ENCODE measurements at regions of chr2 and their contacts with region 1.

Region 1: GRCh38 chr2:222057347-222058073 is 241.3 kb downstream of the PAX3 start:
- DNase-seq: no peak
- H3K4me3 Mint-ChIP-seq: no peak overlapping the region
- H3K27ac Mint-ChIP-seq: no peak overlapping the region
- H3K4me1 Mint-ChIP-seq: peaks cover 7% of the 10 kb centered on the region
- H3K27me3 Mint-ChIP-seq: peaks cover 82% of the 10 kb centered on the region
- CTCF ChIP-seq: peak; percentile 65

Region 2: DNA sequence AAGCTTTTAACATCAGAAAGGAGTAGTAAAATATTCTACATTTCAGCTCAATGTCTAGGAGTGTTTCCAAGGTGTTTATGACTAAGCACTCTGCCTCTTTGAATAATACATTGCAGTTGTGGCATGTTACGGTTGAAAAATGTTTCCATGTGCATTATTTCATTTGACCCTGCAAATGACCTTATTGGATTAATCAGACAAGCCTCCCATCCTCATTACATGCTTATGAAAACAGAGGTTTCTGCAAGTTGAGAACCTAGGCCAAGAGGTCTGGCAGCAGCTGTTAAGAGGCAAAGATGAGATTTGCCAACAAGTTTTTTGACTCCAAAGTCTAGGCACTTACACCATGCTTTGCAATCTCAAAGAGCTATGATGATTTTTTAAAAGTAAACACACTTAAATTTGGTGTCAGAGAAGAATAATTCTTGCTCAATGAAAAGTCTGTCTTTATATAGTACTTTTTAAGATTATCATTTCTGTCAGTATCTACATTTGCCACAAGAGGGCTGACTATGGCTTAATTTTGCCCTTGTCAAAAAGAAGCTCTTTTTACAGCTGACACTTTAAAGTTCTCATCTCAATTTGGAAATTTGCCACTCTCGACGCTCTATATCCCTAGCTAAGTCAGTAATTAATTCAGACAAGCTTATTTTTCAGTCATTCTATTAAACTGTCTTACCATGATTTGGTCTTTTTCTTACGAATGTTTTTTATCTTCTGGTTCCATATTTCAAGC is 19.3 kb before region 1 on chr2:
- CTCF ChIA-PET with region 1: interaction called, 13 read pairs
- intact Hi-C with region 1: no loop called
- DNase-seq: no peak
- H3K4me3 Mint-ChIP-seq: no peak overlapping the region
- H3K27ac Mint-ChIP-seq: no peak overlapping the region
- H3K4me1 Mint-ChIP-seq: no peaks in the 10 kb centered on the region
- H3K27me3 Mint-ChIP-seq: no peaks in the 10 kb centered on the region
- CTCF ChIP-seq: peak; percentile 39

Region 3: DNA sequence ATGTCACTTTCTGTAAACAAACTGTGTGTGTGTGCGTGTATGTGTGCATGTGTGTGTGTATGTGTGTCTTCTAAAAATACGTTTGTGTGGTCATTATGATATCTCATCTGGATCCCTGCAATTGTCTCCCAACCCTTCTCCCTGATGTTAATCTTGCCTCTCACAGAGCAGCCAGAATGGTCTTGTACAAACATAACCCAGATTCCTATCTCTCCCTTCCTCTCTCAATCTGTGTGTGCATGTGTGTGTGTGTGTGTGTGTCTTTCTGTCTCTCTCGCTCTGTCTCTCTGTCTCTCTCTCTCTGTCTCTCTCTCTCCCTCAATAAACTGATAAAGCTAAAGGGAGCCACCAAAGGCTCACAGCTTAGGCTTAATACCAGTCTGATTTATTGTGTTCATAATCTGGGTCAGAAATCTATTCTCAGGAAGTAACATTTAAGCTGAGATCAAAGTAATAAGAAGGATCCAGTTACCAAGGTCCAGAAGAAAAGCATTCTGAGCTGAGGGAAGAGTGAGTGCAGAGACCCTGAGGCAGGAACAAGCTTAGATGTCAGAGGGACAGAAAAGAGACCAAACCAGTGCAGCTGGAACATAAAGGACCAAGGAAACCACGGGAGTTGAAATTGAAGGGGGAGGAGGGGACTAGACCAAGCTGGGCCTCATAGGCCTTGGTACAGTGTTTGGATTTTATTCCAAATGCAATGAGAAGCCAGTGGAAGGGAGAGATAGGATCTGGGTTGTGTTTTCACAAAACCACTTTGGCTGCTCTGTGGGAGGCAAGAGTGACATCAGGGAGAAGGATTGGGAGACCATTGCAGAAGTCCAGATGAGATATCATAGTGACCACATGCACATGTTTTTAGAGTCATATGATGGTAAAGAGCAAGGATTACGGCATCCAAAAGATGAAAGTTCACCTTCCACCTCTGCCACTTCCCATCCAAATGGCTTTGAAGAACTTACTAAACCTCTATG is 30.8 kb after region 1 on chr2:
- CTCF ChIA-PET with region 1: no interaction called
- intact Hi-C with region 1: no loop called
- DNase-seq: no peak
- H3K4me3 Mint-ChIP-seq: no peak overlapping the region
- H3K27ac Mint-ChIP-seq: no peak overlapping the region
- H3K4me1 Mint-ChIP-seq: peaks cover 8% of the 10 kb centered on the region
- H3K27me3 Mint-ChIP-seq: peaks cover 60% of the 10 kb centered on the region
- CTCF ChIP-seq: no peak

Region 4: DNA sequence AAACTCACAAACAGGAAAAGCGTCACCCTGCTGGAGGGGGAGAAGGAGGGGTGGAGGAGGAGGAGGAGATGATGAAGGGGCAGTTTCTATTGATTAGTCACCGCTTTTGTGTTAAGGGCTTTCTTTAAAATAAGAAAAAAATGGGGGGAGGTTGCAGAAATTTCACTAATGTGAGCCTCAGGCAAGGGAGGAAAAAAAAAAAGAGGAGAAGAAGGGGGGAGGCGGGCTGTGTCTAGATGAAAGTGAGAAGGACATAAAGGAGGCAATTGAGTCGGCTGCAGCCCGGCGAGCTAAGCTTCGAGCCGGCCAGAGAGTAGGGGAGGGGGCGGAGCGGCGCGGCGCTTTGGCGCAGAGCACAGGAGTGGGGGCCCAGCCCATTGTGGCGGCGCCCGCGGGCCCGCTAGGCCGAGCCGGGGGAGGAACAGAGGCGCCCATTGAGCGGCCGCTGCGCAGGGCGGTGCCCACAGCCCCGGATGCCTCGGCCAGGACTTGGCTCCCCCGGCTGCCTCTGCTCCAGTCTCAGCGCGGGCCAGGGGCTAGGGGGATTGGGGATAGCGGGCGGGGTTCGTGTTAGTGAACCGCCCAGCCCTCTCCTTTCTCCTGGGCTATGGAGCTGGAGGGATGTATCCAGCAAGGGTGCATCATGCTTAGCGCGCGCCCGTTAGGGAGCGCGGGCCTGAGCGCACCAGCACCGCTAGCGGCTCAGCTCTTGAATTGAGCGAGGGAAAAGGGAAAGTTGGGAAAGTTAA is 233.4 kb after region 1 on chr2:
- CTCF ChIA-PET with region 1: no interaction called
- intact Hi-C with region 1: loop called (anchors 5 kb)
- DNase-seq: no peak
- H3K4me3 Mint-ChIP-seq: peak overlapping the region; percentile 53
- H3K27ac Mint-ChIP-seq: no peak overlapping the region
- H3K4me1 Mint-ChIP-seq: no peaks in the 10 kb centered on the region
- H3K27me3 Mint-ChIP-seq: peaks cover 100% of the 10 kb centered on the region
- CTCF ChIP-seq: no peak

Region 5: GRCh38 chr2:222561817-222562645 is 504.5 kb after region 1 on chr2:
- CTCF ChIA-PET with region 1: interaction called, 5 read pairs
- intact Hi-C with region 1: loop called (anchors 2 kb)
- DNase-seq: peak; percentile 72
- H3K4me3 Mint-ChIP-seq: no peak overlapping the region
- H3K27ac Mint-ChIP-seq: peak overlapping the region; percentile 66
- H3K4me1 Mint-ChIP-seq: no peaks in the 10 kb centered on the region
- H3K27me3 Mint-ChIP-seq: no peaks in the 10 kb centered on the region
- CTCF ChIP-seq: peak; percentile 64

Region 6: GRCh38 chr2:222613715-222614331 is 556.3 kb after region 1 on chr2:
- CTCF ChIA-PET with region 1: no interaction called
- intact Hi-C with region 1: loop called (anchors 5 kb)
- DNase-seq: peak; percentile 13
- H3K4me3 Mint-ChIP-seq: no peak overlapping the region
- H3K27ac Mint-ChIP-seq: no peak overlapping the region
- H3K4me1 Mint-ChIP-seq: no peaks in the 10 kb centered on the region
- H3K27me3 Mint-ChIP-seq: no peaks in the 10 kb centered on the region
- CTCF ChIP-seq: peak; percentile 70

Measured in Calu3 (cell line).